ENCODE measurements at regions of chr17 and their contacts with region 1.

Region 1: GRCh38 chr17:47840740-47841603 is at the start of gene SCRN2:
- DNase-seq: peak; percentile 94
- ATAC-seq: peak; percentile 92
- H3K4me3 Mint-ChIP-seq: peak within 1 kb of the TSS; percentile 99
- H3K27ac Mint-ChIP-seq: peak within 1 kb of the TSS; percentile 89
- H3K4me1 Mint-ChIP-seq: peaks cover 22% of the 10 kb centered on the region
- H3K27me3 Mint-ChIP-seq: peaks cover 15% of the 10 kb centered on the region
- total RNA-seq, gene SCRN2: 21.5 to 25.2 TPM

Region 2: GRCh38 chr17:47757386-47757785 is 83.6 kb before region 1 on chr17:
- CTCF ChIA-PET with region 1: no interaction called
- POLR2A ChIA-PET with region 1: no interaction called
- intact Hi-C with region 1: no loop called
- DNase-seq: no peak
- ATAC-seq: no peak
- H3K4me3 Mint-ChIP-seq: no peak overlapping the region
- H3K27ac Mint-ChIP-seq: no peak overlapping the region
- H3K4me1 Mint-ChIP-seq: no peaks in the 10 kb centered on the region
- H3K27me3 Mint-ChIP-seq: peaks cover 8% of the 10 kb centered on the region

Region 3: GRCh38 chr17:47889734-47890529 is 49.0 kb after region 1 on chr17:
- CTCF ChIA-PET with region 1: interaction called, 414 read pairs
- POLR2A ChIA-PET with region 1: interaction called, 4 read pairs
- intact Hi-C with region 1: loop called (anchors 1 kb)
- DNase-seq: peak; percentile 96
- ATAC-seq: peak; percentile 99
- H3K4me3 Mint-ChIP-seq: no peak overlapping the region
- H3K27ac Mint-ChIP-seq: no peak overlapping the region
- H3K4me1 Mint-ChIP-seq: peaks cover 23% of the 10 kb centered on the region
- H3K27me3 Mint-ChIP-seq: no peaks in the 10 kb centered on the region

Region 4: GRCh38 chr17:47895856-47896671 is 55.1 kb after region 1 on chr17 and contains the start of gene SP2:
- CTCF ChIA-PET with region 1: interaction called, 414 read pairs
- POLR2A ChIA-PET with region 1: interaction called, 4 read pairs
- intact Hi-C with region 1: loop called (anchors 1 kb)
- DNase-seq: peak; percentile 99
- ATAC-seq: peak; percentile 94
- H3K4me3 Mint-ChIP-seq: peak within 1 kb of the TSS; percentile 96
- H3K27ac Mint-ChIP-seq: peak within 1 kb of the TSS; percentile 96
- H3K4me1 Mint-ChIP-seq: peaks cover 46% of the 10 kb centered on the region
- H3K27me3 Mint-ChIP-seq: no peaks in the 10 kb centered on the region
- total RNA-seq, gene SP2: 15.7 to 19.8 TPM

Region 5: GRCh38 chr17:47949136-47949759 is 108.3 kb after region 1 on chr17:
- CTCF ChIA-PET with region 1: interaction called, 14 read pairs
- POLR2A ChIA-PET with region 1: no interaction called
- intact Hi-C with region 1: loop called (anchors 1 to 5 kb)
- DNase-seq: peak; percentile 91
- ATAC-seq: peak; percentile 75
- H3K4me3 Mint-ChIP-seq: peak overlapping the region; percentile 30
- H3K27ac Mint-ChIP-seq: peak overlapping the region; percentile 66
- H3K4me1 Mint-ChIP-seq: peaks cover 43% of the 10 kb centered on the region
- H3K27me3 Mint-ChIP-seq: no peaks in the 10 kb centered on the region

Region 6: DNA sequence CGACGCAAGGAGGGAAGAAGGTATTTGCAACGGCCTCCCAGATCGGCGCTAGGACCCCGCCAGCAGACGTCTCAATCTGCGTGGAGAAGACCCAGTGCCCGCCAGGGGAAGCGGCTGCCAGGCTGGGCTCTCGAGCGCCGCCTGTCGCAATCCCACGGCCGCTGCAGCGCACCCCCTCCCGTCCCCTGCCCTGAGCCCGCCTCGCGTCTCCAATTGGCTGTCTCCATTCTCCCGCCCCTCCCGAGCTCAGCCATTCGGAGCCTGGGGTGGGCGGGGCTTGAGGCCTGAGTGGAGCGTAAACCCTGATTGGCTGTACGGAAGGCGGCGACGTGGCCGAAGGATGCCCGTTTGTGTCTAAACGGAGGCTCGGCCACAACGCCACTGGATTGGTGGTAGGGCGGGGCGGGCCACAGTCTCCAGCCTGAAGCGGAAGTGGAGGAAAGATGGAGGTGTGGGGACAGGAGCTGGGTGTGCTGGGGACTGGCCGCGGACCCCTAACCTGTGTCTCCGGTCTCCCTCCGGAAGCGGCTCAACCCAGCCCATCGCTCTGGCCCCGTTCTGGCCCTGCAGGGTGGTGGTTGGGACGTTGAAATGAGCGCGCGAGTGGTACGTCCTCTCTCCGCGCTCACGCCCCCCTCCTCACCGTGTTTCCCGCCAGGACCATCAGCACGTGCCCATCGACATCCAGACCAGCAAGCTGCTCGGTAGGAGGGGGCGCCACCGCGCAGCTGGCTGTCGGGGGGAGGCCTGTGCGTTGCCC is 129.9 kb after region 1 on chr17 and contains the start of gene CDK5RAP3:
- CTCF ChIA-PET with region 1: interaction called, 7 read pairs
- POLR2A ChIA-PET with region 1: no interaction called
- intact Hi-C with region 1: loop called (anchors 1 to 2 kb)
- DNase-seq: peak; percentile 100
- ATAC-seq: peak; percentile 100
- H3K4me3 Mint-ChIP-seq: peak within 1 kb of the TSS; percentile 97
- H3K27ac Mint-ChIP-seq: peak within 1 kb of the TSS; percentile 94
- H3K4me1 Mint-ChIP-seq: peaks cover 21% of the 10 kb centered on the region
- H3K27me3 Mint-ChIP-seq: no peaks in the 10 kb centered on the region
- total RNA-seq, gene CDK5RAP3: 147 to 156 TPM

Region 7: GRCh38 chr17:48011405-48012150 is 170.6 kb after region 1 on chr17:
- CTCF ChIA-PET with region 1: interaction called, 5 read pairs
- POLR2A ChIA-PET with region 1: no interaction called
- intact Hi-C with region 1: loop called in 1 of 2 experiments (anchors 10 kb)
- DNase-seq: peak; percentile 72
- ATAC-seq: peak; percentile 80
- H3K4me3 Mint-ChIP-seq: peak overlapping the region; percentile 49
- H3K27ac Mint-ChIP-seq: no peak overlapping the region
- H3K4me1 Mint-ChIP-seq: peaks cover 12% of the 10 kb centered on the region
- H3K27me3 Mint-ChIP-seq: peaks cover 42% of the 10 kb centered on the region

Region 8: DNA sequence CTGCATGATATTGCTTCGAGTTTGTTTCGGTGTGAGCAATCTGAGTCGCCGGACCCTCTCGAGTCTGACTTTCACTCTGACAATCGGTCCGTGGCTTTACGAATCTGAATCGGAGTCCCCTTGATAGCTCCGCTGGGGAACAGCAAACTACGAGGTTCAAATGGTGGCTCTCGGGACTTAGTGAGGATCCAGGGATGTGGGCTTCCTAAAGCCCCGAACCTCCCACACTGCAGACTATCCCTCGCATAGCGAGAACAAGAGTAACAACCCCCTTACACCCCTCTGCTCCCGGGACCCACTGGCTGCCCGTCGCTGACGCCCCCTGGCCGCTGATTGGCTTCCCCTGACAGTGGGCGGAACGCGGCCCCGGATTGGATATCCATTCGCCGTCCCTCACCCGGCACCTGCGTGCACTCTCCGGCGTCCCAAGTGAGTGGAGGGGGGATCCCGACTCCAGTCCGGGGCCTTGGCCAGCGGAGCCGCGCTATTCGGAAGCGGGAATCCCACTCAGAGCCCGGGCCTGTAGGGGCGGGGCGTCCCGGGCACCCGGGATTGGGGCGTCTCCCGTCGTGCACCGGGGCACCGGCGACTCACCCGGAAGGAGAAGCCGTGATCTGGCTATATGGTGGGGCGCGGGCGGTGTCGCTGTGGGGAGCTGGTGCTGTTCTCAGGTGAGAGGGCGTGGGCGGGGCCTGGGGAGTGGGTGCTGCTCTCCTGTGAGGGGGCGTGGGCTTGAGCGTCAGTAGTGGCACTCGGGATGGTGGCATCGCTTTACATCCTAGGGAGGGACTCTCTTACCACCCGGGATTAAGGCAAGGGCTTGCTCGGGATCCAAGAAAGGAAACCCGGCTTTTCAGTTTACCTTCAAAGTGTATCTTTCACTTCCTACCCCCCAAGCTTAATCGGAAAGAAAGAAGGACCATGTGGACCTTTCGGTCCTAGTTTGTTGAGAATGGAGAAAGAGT is 266.5 kb after region 1 on chr17 and contains the start of gene SNX11:
- CTCF ChIA-PET with region 1: no interaction called
- POLR2A ChIA-PET with region 1: no interaction called
- intact Hi-C with region 1: loop called in 1 of 2 experiments (anchors 5 kb)
- DNase-seq: peak; percentile 97
- ATAC-seq: peak; percentile 87
- H3K4me3 Mint-ChIP-seq: peak within 1 kb of the TSS; percentile 97
- H3K27ac Mint-ChIP-seq: peak within 1 kb of the TSS; percentile 98
- H3K4me1 Mint-ChIP-seq: peaks cover 61% of the 10 kb centered on the region
- H3K27me3 Mint-ChIP-seq: no peaks in the 10 kb centered on the region
- total RNA-seq, gene SNX11: 18.0 to 21.4 TPM

Measured in activated CD4-positive, alpha-beta T cell treated with anti-CD3 and anti-CD28 coated beads for 36 hours (primary cell).